ENCODE measurements at regions of chr19 and their contacts with region 1.

Region 1: DNA sequence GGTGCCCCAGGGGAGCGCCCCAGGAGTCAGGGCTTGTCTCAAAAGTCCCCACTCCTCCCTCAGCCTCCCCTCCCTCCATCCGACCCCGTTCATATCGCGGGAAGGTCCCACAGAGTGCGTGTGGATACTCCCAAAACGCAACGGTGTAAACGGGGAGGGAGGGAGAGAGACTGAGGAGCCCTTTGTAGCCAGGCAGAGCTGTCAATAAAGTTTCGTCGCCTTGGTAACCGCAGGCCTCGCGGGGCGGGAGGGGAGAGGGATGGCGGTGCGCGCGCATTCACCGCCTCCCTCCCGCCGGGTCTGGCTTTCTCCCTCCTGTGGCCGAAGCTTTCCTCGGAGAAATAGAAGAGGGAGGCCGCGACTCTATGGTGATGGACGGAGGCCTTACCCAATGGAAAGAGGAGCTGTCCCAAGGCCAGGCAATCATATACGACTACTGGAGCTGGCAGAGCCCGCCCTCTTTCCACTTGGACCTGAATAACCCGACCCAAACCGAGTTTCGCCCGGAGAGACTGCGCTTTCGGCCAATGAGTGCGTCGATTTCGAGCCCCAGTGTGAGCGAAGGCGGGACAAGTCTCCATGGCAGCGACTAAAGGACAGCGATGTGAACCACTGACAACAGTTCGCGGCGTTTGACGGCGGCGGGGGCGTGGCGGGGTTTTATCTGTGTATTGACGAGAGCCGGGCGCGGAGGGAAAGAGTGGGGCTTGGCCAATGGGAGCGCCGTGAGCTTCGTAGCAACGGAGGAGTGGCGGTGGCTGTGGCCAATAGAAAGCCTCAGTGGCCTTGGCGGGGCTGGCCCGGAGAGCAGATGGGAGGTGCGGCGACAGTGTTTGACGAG is at the start of gene KMT5C:
- DNase-seq: peak; percentile 100
- H3K4me3 Mint-ChIP-seq: peak within 1 kb of the TSS; percentile 91
- H3K27ac Mint-ChIP-seq: peak within 1 kb of the TSS; percentile 97
- H3K4me1 Mint-ChIP-seq: peaks cover 16% of the 10 kb centered on the region
- H3K27me3 Mint-ChIP-seq: peaks cover 11% of the 10 kb centered on the region
- total RNA-seq, gene KMT5C: 31.3 and 32.2 TPM in 2 replicates

Region 2: DNA sequence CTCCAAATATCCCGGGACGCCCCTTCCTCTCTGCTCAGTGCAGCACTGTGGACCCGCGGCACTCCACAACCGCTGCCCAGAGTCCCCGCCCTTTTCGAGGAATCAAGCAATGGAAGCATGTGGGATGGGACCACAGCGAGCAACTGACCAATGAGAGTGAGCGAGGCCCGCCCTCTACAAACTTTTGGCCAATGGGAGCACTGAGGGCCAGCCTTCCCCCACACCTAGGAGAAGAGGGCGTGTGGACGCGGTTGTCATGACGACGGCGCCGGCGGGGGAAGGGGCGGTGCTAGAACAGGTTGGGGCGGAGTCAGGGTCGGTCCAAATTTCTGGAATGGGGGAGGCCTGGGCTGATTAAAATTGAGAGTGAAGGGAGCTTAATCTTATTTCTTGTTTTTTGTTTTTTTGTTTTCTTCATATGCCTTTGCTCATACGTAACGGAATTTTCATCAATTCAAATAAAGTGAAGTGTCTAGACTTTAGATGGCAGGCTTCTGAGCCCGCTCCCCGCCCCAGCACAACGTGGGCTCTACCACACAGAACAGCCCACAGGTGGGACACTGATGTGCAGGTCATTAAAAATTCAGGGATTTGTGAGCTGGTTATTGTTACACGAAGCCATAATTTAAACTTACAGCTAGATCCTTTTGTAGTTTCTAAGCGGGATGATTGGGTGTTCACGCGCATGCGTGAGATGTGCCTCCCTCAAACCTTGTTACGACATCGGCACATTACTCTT is 172.6 kb before region 1 on chr19 and contains the start of gene DNAAF3:
- intact Hi-C with region 1: loop called (anchors 1 kb)
- DNase-seq: peak; percentile 93
- H3K4me3 Mint-ChIP-seq: peak within 1 kb of the TSS; percentile 84
- H3K27ac Mint-ChIP-seq: peak within 1 kb of the TSS; percentile 13
- H3K4me1 Mint-ChIP-seq: peaks cover 11% of the 10 kb centered on the region
- H3K27me3 Mint-ChIP-seq: peaks cover 55% of the 10 kb centered on the region
- total RNA-seq, gene DNAAF3: not detected in 2 replicates

Region 3: DNA sequence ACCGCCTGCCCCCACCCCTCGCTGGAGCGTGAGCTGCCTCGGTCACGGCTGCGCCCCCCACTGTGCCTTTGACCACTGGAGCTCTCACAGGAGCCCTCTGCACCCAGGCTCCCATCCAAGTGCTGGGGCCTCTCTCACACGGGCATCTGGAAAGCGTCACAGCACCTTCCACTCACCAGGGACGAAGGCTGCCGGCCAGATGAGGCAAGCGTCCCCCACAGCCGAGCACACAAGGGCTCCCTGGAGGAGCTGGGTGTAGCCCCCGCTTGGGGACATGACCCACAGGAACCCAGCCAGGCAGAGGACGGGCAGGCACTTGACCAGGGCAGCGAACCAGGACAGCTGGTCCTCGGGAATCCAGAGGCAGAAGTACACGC is 111.3 kb before region 1 on chr19:
- intact Hi-C with region 1: no loop called
- DNase-seq: no peak
- H3K4me3 Mint-ChIP-seq: no peak overlapping the region
- H3K27ac Mint-ChIP-seq: no peak overlapping the region
- H3K4me1 Mint-ChIP-seq: no peaks in the 10 kb centered on the region
- H3K27me3 Mint-ChIP-seq: no peaks in the 10 kb centered on the region

Region 4: GRCh38 chr19:55301459-55302317 is 37.6 kb before region 1 on chr19:
- intact Hi-C with region 1: loop called (anchors 1 kb)
- DNase-seq: peak; percentile 99
- H3K4me3 Mint-ChIP-seq: peak overlapping the region; percentile 95
- H3K27ac Mint-ChIP-seq: peak overlapping the region; percentile 95
- H3K4me1 Mint-ChIP-seq: peaks cover 16% of the 10 kb centered on the region
- H3K27me3 Mint-ChIP-seq: no peaks in the 10 kb centered on the region

Region 5: GRCh38 chr19:55385740-55386529 is 46.7 kb after region 1 on chr19 and contains the start of gene RPL28:
- intact Hi-C with region 1: loop called (anchors 1 kb)
- DNase-seq: peak; percentile 100
- H3K4me3 Mint-ChIP-seq: peak within 1 kb of the TSS; percentile 97
- H3K27ac Mint-ChIP-seq: peak within 1 kb of the TSS; percentile 98
- H3K4me1 Mint-ChIP-seq: peaks cover 52% of the 10 kb centered on the region
- H3K27me3 Mint-ChIP-seq: no peaks in the 10 kb centered on the region
- total RNA-seq, gene RPL28: 1,992 and 2,022 TPM in 2 replicates

Region 6: DNA sequence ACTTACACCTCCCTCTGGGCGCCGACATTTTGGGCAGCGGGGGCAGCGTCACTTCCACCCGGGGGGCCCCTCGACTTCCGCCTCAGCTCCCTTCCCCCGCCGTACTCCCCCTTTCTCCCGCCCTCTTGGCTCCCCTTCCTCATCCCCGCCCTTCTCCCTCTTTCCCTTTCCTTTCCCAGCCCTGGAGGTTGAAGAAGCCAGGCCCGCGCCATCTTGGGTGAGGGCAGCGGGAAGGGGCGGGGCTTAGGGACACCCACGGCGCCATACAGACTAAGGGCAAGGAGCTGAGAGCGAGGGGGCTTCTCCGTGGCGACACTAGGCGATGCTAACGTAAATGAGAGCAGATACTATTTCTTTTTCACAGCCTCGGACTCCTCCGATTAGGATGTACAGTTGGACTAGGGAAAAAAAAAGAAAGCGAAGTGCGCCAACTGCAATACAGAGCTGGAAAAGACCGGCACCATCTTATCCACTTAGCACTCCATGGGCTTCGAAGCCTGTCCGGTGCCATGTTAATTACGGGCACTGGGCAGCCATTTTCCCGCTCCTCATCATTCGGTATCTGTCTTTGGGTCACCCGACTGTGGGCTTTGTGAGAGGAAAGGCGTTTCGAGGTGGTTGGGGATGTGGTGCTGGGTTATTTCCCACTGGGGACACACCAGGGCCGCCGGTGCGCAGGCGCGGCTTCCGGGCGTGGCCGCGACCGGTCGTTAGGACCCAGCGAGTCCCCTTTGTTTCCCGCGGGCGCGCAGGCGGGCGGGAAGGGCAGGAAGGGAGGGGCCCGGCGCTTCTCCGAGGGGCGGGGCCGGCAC is 260.4 kb after region 1 on chr19 and contains the start of gene FIZ1:
- intact Hi-C with region 1: loop called (anchors 1 kb)
- DNase-seq: peak; percentile 99
- H3K4me3 Mint-ChIP-seq: peak within 1 kb of the TSS; percentile 88
- H3K27ac Mint-ChIP-seq: peak within 1 kb of the TSS; percentile 98
- H3K4me1 Mint-ChIP-seq: peaks cover 33% of the 10 kb centered on the region
- H3K27me3 Mint-ChIP-seq: no peaks in the 10 kb centered on the region
- total RNA-seq, gene FIZ1: 20.4 and 21.4 TPM in 2 replicates